Calu3 (cell line): ENCODE measurements at regions of chr5 and their contacts with region 1.

Region 1: GRCh38 chr5:84274585-84275468 is 109.9 kb downstream of the EDIL3 start:
- DNase-seq: peak; percentile 55
- H3K4me3 Mint-ChIP-seq: no peak overlapping the region
- H3K27ac Mint-ChIP-seq: no peak overlapping the region
- H3K4me1 Mint-ChIP-seq: peaks cover 12% of the 10 kb centered on the region
- H3K27me3 Mint-ChIP-seq: no peaks in the 10 kb centered on the region
- CTCF ChIP-seq: peak; percentile 66

Region 2: DNA sequence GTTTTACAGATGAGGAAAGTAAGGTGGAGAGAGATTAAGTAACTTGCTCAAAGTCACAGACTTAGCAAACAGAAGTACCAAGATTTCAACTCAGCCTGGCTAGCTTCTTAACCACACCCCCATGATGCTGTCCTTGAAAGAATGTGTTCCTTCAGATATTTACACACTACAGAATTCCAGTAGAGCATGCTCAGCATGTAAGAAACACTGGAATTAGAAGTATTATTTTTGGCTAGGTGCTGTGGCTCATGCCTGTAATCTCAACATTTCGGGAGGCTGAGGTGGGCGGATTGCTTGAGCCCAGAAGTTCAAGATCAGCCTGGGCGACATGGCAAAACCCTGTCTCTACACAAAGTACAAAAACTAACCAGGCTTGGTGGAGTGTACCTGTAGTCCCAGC is 32.5 kb before region 1 on chr5:
- CTCF ChIA-PET with region 1: no interaction called
- intact Hi-C with region 1: no loop called
- DNase-seq: no peak
- H3K4me3 Mint-ChIP-seq: no peak overlapping the region
- H3K27ac Mint-ChIP-seq: no peak overlapping the region
- H3K4me1 Mint-ChIP-seq: peaks cover 8% of the 10 kb centered on the region
- H3K27me3 Mint-ChIP-seq: no peaks in the 10 kb centered on the region
- CTCF ChIP-seq: no peak

Region 3: DNA sequence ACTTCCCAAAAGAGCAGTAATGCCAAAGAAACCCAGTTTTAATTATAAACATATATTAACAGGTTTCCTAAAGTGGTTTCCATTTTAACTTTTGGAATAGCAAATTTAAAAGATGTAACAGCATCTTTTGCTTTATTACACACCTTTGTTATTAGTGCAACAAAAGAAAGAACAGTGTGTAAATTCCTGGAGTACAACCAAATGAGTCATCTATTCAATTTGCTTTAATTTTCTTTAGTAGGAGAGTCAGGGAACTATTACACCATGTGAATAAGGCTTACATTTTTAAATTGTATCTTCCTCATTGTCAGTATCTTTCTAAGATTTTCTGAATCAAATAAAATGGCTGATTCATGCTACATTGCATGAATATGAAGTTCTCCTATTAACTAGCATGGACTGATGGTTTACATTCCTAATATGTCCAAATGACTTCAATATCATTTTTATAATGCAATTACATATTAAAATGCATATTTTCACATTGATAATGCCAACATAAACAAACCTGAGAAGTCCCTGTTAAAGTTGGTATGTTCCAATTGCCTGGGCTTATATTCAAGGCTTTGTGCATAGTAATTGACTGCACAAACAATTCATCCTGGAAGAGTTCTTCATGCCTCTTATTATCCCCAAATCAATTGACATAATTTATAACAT is 87.4 kb after region 1 on chr5:
- CTCF ChIA-PET with region 1: no interaction called
- intact Hi-C with region 1: no loop called
- DNase-seq: no peak
- H3K4me3 Mint-ChIP-seq: no peak overlapping the region
- H3K27ac Mint-ChIP-seq: no peak overlapping the region
- H3K4me1 Mint-ChIP-seq: no peaks in the 10 kb centered on the region
- H3K27me3 Mint-ChIP-seq: no peaks in the 10 kb centered on the region
- CTCF ChIP-seq: no peak

Region 4: GRCh38 chr5:84379749-84380148 is 104.9 kb after region 1 on chr5:
- CTCF ChIA-PET with region 1: no interaction called
- intact Hi-C with region 1: loop called (anchors 1 kb)
- DNase-seq: no peak
- H3K4me3 Mint-ChIP-seq: no peak overlapping the region
- H3K27ac Mint-ChIP-seq: no peak overlapping the region
- H3K4me1 Mint-ChIP-seq: peaks cover 8% of the 10 kb centered on the region
- H3K27me3 Mint-ChIP-seq: no peaks in the 10 kb centered on the region
- CTCF ChIP-seq: no peak

Region 5: GRCh38 chr5:84450617-84451414 is 176.0 kb after region 1 on chr5:
- CTCF ChIA-PET with region 1: no interaction called
- intact Hi-C with region 1: loop called (anchors 2 kb)
- DNase-seq: no peak
- H3K4me3 Mint-ChIP-seq: no peak overlapping the region
- H3K27ac Mint-ChIP-seq: no peak overlapping the region
- H3K4me1 Mint-ChIP-seq: no peaks in the 10 kb centered on the region
- H3K27me3 Mint-ChIP-seq: no peaks in the 10 kb centered on the region
- CTCF ChIP-seq: no peak

Region 6: GRCh38 chr5:85049020-85049419 is 774.2 kb after region 1 on chr5:
- CTCF ChIA-PET with region 1: no interaction called
- intact Hi-C with region 1: loop called (anchors 1 kb)
- DNase-seq: peak; percentile 6
- H3K4me3 Mint-ChIP-seq: no peak overlapping the region
- H3K27ac Mint-ChIP-seq: no peak overlapping the region
- H3K4me1 Mint-ChIP-seq: no peaks in the 10 kb centered on the region
- H3K27me3 Mint-ChIP-seq: no peaks in the 10 kb centered on the region
- CTCF ChIP-seq: peak; percentile 39